Gastrocnemius medialis (tissue), 4 donors: ENCODE measurements at regions of chr1 and their contacts with region 1.

Region 1: DNA sequence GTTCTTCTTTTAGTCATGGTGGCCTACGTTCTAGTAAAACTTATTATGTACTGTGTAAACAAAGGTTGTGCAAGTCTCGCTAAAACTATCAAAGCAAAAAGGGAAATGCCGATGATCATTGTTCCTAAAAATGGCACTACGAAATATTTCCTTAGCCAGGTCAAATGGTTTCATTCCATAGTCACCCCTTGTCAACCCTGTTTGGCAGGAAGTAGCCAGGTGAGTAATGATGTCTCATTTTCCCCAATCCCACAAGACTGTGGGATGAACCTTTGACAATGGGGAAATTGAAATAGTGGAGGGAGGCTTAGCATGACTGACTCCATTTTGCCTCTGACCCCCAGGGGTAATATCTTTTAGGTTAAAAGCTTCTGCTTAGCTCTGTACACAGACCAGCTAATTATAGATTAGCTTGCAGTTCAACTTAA is 5.6 kb upstream of the REN start:
- DNase-seq: no peak
- ATAC-seq: no peak
- H3K4me3 ChIP-seq: no peak overlapping the region
- H3K27ac ChIP-seq: no peak overlapping the region
- H3K4me1 ChIP-seq: no peaks in the 10 kb centered on the region
- H3K27me3 ChIP-seq: peaks cover 0 to 4% (median 3%) of the 10 kb centered on the region in 3 donors
- CTCF ChIP-seq: no peak
- POLR2A ChIP-seq: no peak

Region 2: GRCh38 chr1:204207136-204207616 is 35.4 kb after region 1 on chr1:
- in situ Hi-C with region 1: loop called in 3 of 4 experiments (anchors 5 kb)
- intact Hi-C with region 1: no loop called
- DNase-seq: peak; percentile 34 to 37
- ATAC-seq: peak; percentile 74 to 75
- H3K4me3 ChIP-seq: no peak overlapping the region
- H3K27ac ChIP-seq: no peak overlapping the region
- H3K4me1 ChIP-seq: no peaks in the 10 kb centered on the region
- H3K27me3 ChIP-seq: peaks cover 0 to 6% (median 3%) of the 10 kb centered on the region in 3 donors
- CTCF ChIP-seq: peak; percentile 61 to 91 (median 88)
- POLR2A ChIP-seq: no peak

Region 3: DNA sequence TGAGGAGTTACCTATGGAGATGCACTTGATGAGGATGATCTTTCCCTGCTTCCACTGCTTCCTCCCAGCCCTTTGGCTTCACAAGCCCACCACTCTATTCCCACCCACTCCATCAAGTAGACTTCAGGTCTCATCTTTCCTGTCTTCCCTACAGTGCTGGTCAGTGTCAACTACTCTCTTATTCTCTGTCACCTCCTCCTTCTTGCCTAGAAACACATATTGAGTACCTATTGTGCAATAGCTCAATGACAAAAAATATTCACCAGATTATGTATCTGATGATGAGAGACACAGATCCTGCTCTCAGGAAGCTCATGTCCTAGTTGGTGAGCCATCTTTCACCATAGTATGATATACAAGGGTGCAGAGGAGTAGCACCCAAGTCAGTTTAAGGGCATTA is 616.7 kb after region 1 on chr1:
- in situ Hi-C with region 1: no loop called
- intact Hi-C with region 1: loop called (anchors 5 kb)
- DNase-seq: no peak
- ATAC-seq: no peak
- H3K4me3 ChIP-seq: no peak overlapping the region
- H3K27ac ChIP-seq: no peak overlapping the region
- H3K4me1 ChIP-seq: no peaks in the 10 kb centered on the region
- H3K27me3 ChIP-seq: peaks cover 4 to 30% (median 5%) of the 10 kb centered on the region in 3 donors
- CTCF ChIP-seq: no peak
- POLR2A ChIP-seq: no peak